ENCODE measurements at regions of chrX and their contacts with region 1.

Region 1: DNA sequence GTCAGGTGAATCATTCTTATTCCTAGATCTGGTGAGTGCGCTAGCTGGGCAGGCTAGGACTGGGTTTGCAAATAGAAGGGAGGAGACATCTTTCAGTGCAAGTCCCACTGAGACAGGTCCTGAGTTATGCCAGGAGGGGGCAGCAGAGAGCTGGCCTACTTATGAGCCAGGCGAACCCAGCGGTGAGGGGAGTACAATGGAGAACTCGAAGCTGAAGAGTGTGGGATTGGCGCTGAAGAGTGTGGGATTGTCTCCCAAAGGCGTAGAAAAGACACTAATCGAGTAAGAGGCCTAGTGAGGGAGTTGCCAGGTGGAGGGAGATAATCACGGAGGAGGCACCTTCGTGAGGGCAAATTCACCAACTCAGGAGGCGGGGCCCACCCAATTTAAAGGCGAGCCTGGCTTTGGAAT is 91.7 kb upstream of the CXorf66 start:
- DNase-seq: peak; percentile 68
- ATAC-seq: peak; percentile 98
- H3K4me3 ChIP-seq: no peak overlapping the region
- H3K27ac ChIP-seq: no peak overlapping the region
- H3K4me1 ChIP-seq: no peaks in the 10 kb centered on the region
- H3K27me3 ChIP-seq: no peaks in the 10 kb centered on the region
- CTCF ChIP-seq: peak; percentile 70
- POLR2A ChIP-seq: no peak
- RAD21 ChIP-seq: peak; percentile 67

Region 2: DNA sequence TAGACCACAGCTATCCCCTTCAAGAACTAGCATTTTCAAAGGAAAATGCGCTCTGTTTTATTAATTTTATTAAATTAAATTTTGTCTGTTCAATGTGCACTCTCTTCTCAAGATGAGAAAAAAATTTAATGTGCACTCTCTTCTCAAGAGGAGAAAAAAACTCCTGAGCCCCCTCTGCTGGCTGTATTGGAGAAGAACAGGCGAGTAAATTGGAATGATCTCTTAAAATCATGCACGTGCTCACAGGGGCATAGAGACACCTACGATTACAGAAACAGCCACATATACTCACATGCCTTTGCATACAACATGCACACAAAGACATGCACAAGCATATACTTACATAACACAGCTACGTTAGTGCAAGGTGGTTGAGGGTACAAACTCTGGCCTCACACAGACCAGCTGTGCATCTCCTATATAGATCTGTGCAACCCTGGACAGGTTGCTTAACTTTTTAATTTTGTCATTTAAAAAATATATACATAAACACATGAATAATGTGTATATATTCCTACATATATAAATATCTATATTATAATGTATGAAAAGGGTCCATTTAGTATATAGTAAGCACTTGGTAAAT is 84.5 kb after region 1 on chrX:
- CTCF ChIA-PET with region 1: interaction called, 3 read pairs
- POLR2A ChIA-PET with region 1: no interaction called
- dilution Hi-C with region 1: no loop called
- in situ Hi-C with region 1: no loop called
- intact Hi-C with region 1: loop called (anchors 1 kb)
- DNase-seq: peak; percentile 31
- ATAC-seq: peak; percentile 87
- H3K4me3 ChIP-seq: no peak overlapping the region
- H3K27ac ChIP-seq: no peak overlapping the region
- H3K4me1 ChIP-seq: no peaks in the 10 kb centered on the region
- H3K27me3 ChIP-seq: no peaks in the 10 kb centered on the region
- CTCF ChIP-seq: peak; percentile 64
- POLR2A ChIP-seq: no peak
- RAD21 ChIP-seq: peak; percentile 41

Region 3: GRCh38 chrX:140503714-140504351 is 446.8 kb after region 1 on chrX:
- CTCF ChIA-PET with region 1: no interaction called
- POLR2A ChIA-PET with region 1: no interaction called
- dilution Hi-C with region 1: no loop called
- in situ Hi-C with region 1: no loop called
- intact Hi-C with region 1: loop called (anchors 10 kb)
- DNase-seq: peak; percentile 7
- ATAC-seq: peak; percentile 74
- H3K4me3 ChIP-seq: peak overlapping the region; percentile 39
- H3K27ac ChIP-seq: no peak overlapping the region
- H3K4me1 ChIP-seq: no peaks in the 10 kb centered on the region
- H3K27me3 ChIP-seq: peaks cover 75% of the 10 kb centered on the region
- CTCF ChIP-seq: 0 out of 2 replicates have a peak, but pooled peaks have one; percentile 10
- POLR2A ChIP-seq: no peak
- RAD21 ChIP-seq: no peak

Region 4: DNA sequence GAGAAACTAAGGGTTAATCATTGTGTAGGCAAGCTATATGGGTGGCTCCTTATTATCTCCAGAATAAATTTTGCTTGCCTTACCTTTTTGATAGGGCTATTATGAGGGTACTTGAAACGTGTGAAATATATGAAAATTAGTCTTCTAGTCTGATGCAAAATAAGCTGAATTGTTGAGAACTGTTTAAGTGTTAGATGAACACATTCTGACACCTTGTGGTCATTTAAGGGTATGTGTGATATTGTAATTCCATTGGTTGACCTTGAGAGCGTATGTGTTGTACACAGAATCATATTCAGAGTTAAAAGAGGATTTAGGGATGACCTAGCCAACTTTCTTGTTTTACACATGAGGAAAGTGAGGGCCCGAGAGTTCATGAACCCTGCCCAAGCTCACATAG is 607.9 kb after region 1 on chrX:
- CTCF ChIA-PET with region 1: interaction called, 9 read pairs
- POLR2A ChIA-PET with region 1: no interaction called
- dilution Hi-C with region 1: no loop called
- in situ Hi-C with region 1: loop called (anchors 25 kb)
- intact Hi-C with region 1: loop called (anchors 1 kb)
- DNase-seq: peak; percentile 18
- ATAC-seq: no peak
- H3K4me3 ChIP-seq: no peak overlapping the region
- H3K27ac ChIP-seq: no peak overlapping the region
- H3K4me1 ChIP-seq: no peaks in the 10 kb centered on the region
- H3K27me3 ChIP-seq: no peaks in the 10 kb centered on the region
- CTCF ChIP-seq: peak; percentile 43
- POLR2A ChIP-seq: no peak
- RAD21 ChIP-seq: peak; percentile 47

Region 5: DNA sequence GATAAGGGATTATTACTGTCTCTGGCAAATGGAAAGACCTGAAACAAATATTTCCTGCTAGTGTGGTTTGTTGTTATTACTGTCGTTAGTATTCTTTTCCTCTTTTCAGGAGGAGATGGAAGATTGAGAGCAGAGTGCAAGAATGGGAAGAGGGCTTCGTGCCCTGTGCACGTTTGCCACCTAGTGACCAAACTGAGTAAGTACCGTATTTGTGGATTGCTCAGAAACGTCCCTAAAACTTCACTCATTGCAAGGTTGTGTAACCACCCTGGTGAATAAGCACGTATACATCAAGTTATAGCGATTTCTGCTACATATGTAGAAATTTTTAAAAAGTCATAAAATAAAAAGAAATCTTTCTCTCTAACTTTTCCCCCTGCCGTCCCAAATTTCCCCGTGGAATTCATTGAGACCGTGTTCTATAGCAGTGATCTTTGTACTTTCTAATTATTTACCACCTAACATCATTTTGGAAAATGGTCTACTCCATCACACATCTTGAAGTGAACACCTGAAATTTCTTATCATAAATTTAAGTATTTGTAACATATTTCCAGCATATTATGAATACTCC is 676.9 kb after region 1 on chrX:
- CTCF ChIA-PET with region 1: no interaction called
- POLR2A ChIA-PET with region 1: no interaction called
- dilution Hi-C with region 1: no loop called
- in situ Hi-C with region 1: no loop called
- intact Hi-C with region 1: loop called (anchors 10 kb)
- DNase-seq: peak; percentile 57
- ATAC-seq: peak; percentile 98
- H3K4me3 ChIP-seq: no peak overlapping the region
- H3K27ac ChIP-seq: no peak overlapping the region
- H3K4me1 ChIP-seq: no peaks in the 10 kb centered on the region
- H3K27me3 ChIP-seq: no peaks in the 10 kb centered on the region
- CTCF ChIP-seq: peak; percentile 84
- POLR2A ChIP-seq: no peak
- RAD21 ChIP-seq: peak; percentile 90

Measured in IMR-90 (cell line).